ENCODE measurements at regions of chr10 and their contacts with region 1.

Region 1: GRCh38 chr10:100481462-100482081 is 18.8 kb downstream of the WNT8B start:
- DNase-seq: peak; percentile 79 to 98 (median 92)
- ATAC-seq: peak; percentile 96
- H3K4me3 ChIP-seq: peak overlapping the region; percentile 69
- H3K4me3 Mint-ChIP-seq: peak overlapping the region; percentile 80
- H3K27ac ChIP-seq: no peak overlapping the region
- H3K27ac Mint-ChIP-seq: no peak overlapping the region
- H3K4me1 ChIP-seq: peaks cover 17% of the 10 kb centered on the region
- H3K4me1 Mint-ChIP-seq: peaks cover 13% of the 10 kb centered on the region
- H3K27me3 ChIP-seq: peaks cover 17 to 22% of the 10 kb centered on the region in 2 experiments
- H3K27me3 Mint-ChIP-seq: peaks cover 32% of the 10 kb centered on the region
- CTCF ChIP-seq: no peak

Region 2: GRCh38 chr10:100223879-100224278 is 257.7 kb before region 1 on chr10:
- CTCF ChIA-PET with region 1: no interaction called
- POLR2A ChIA-PET with region 1: no interaction called
- intact Hi-C with region 1: no loop called
- DNase-seq: no peak
- ATAC-seq: no peak
- H3K4me3 ChIP-seq: no peak overlapping the region
- H3K4me3 Mint-ChIP-seq: no peak overlapping the region
- H3K27ac ChIP-seq: no peak overlapping the region
- H3K27ac Mint-ChIP-seq: no peak overlapping the region
- H3K4me1 ChIP-seq: peaks cover 9% of the 10 kb centered on the region
- H3K4me1 Mint-ChIP-seq: peaks cover 18% of the 10 kb centered on the region
- H3K27me3 ChIP-seq: no peaks in the 10 kb centered on the region
- H3K27me3 Mint-ChIP-seq: no peaks in the 10 kb centered on the region
- CTCF ChIP-seq: no peak

Region 3: DNA sequence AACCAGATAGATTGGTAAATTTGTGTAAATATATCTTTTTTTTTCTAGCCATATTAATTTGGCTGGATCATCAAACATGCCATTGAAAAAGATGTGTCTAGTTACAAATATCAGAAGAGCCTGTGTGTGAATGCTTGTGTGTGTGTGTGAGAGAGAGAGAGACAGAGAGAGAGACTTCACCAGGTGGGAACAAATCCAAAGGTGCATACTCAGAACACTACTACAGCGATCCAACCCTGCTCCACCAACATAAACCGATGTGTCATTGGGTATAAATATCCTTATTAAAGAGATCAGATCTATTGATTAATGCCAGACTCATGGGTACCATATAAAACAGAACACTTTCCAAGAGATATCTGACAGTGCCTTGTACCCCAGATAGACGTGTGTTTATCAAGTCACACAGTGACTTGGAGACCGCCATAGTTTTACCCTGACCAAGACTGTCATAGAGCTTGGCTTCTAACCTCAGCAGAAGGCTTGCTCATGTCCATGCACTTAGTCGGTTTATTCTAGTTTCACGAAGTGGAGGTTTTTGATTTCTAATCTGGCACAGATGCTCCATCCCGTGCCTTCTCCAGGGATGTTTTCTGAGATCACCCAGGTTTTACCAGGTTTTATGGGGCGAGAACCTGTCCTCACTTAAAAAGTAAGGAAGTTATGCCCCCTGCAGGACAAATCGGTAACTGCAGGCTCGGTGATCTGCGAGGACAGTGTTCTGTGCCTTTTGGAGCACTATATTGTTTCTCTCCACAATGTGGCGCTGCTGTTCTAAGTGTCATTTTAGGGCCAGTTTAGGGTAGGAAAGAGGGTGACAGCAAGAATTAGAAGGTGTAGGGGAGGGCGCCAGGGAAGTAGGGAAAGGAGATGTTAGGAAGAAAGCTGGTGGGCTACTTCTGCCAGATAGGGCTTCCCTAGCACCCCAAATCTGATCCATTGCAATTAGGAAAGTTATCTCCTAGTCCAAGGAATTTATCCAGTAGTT is 48.0 kb before region 1 on chr10:
- CTCF ChIA-PET with region 1: interaction called, 10 read pairs
- POLR2A ChIA-PET with region 1: no interaction called
- intact Hi-C with region 1: loop called in 1 of 2 experiments (anchors 5 kb)
- DNase-seq: peak; percentile 88 to 99 (median 94)
- ATAC-seq: peak; percentile 99
- H3K4me3 ChIP-seq: no peak overlapping the region
- H3K4me3 Mint-ChIP-seq: no peak overlapping the region
- H3K27ac ChIP-seq: no peak overlapping the region
- H3K27ac Mint-ChIP-seq: no peak overlapping the region
- H3K4me1 ChIP-seq: peaks cover 5% of the 10 kb centered on the region
- H3K4me1 Mint-ChIP-seq: no peaks in the 10 kb centered on the region
- H3K27me3 ChIP-seq: no peaks in the 10 kb centered on the region
- H3K27me3 Mint-ChIP-seq: peaks cover 5% of the 10 kb centered on the region
- CTCF ChIP-seq: peak; percentile 100

Region 4: DNA sequence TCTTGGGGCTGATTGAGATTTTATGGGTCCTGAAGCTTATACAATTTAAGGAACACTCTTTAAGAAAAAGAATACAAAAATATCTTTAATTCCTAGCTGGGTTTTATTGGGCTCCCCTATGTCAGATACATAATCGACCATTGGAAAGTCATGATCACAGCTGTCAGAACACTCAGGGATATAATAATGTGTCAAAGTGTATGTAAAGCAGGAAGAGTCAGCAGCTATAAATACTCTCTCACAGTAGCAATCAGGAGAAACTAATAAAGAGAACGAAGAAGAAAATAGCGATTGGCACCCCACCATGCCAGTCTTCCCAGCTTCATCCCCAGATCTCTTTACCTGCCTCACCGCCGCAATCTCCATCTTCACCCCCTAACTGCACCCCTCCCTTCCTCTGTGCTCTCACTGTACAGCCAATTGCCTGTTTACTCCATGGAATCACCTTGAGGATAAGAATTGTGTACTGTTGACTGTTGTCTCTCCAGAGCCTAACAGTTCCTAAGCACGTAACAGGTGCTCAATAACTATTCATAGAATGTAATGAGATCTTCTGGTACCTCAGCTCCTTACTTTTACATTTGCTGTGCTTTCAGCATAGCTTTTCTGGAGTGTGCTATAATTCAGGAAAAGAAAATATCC is 42.8 kb before region 1 on chr10:
- CTCF ChIA-PET with region 1: interaction called, 10 read pairs
- POLR2A ChIA-PET with region 1: no interaction called
- intact Hi-C with region 1: loop called in 1 of 2 experiments (anchors 5 kb)
- DNase-seq: no peak
- ATAC-seq: no peak
- H3K4me3 ChIP-seq: no peak overlapping the region
- H3K4me3 Mint-ChIP-seq: no peak overlapping the region
- H3K27ac ChIP-seq: no peak overlapping the region
- H3K27ac Mint-ChIP-seq: no peak overlapping the region
- H3K4me1 ChIP-seq: peaks cover 2% of the 10 kb centered on the region
- H3K4me1 Mint-ChIP-seq: no peaks in the 10 kb centered on the region
- H3K27me3 ChIP-seq: no peaks in the 10 kb centered on the region
- H3K27me3 Mint-ChIP-seq: peaks cover 3% of the 10 kb centered on the region
- CTCF ChIP-seq: no peak

Region 5: DNA sequence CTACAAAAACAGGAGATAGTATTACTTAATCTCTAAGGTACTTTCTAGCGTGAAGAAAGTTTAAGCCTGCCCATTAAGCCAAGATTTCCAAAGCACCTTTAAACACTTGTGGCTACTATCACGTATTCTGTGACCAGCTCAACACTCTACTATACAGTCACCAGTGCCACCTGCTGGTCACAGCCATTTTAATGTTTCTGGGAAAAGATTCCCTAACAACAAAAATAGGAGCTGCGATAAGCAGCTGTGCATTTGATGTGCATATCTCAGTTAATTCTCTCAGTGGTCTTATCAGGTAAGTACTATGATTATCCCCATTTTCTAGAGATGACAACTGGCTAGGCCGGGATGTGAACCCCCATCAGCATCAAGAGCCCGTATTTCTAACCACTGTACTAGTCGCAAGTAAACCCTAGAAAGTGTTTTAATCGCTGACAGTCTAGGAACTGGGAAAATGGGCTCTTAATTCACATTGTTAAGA is 37.2 kb after region 1 on chr10:
- CTCF ChIA-PET with region 1: interaction called, 45 read pairs
- POLR2A ChIA-PET with region 1: interaction called, 4 read pairs
- intact Hi-C with region 1: loop called (anchors 1 to 2 kb)
- DNase-seq: peak; percentile 38 to 76 (median 52)
- ATAC-seq: peak; percentile 80
- H3K4me3 ChIP-seq: no peak overlapping the region
- H3K4me3 Mint-ChIP-seq: no peak overlapping the region
- H3K27ac ChIP-seq: no peak overlapping the region
- H3K27ac Mint-ChIP-seq: peak overlapping the region; percentile 29
- H3K4me1 ChIP-seq: peaks cover 12% of the 10 kb centered on the region
- H3K4me1 Mint-ChIP-seq: peaks cover 16% of the 10 kb centered on the region
- H3K27me3 ChIP-seq: no peaks in the 10 kb centered on the region
- H3K27me3 Mint-ChIP-seq: no peaks in the 10 kb centered on the region
- CTCF ChIP-seq: peak; percentile 88

Region 6: GRCh38 chr10:100551196-100551595 is 69.6 kb after region 1 on chr10:
- CTCF ChIA-PET with region 1: no interaction called
- POLR2A ChIA-PET with region 1: no interaction called
- intact Hi-C with region 1: no loop called
- DNase-seq: no peak
- ATAC-seq: no peak
- H3K4me3 ChIP-seq: no peak overlapping the region
- H3K4me3 Mint-ChIP-seq: no peak overlapping the region
- H3K27ac ChIP-seq: no peak overlapping the region
- H3K27ac Mint-ChIP-seq: no peak overlapping the region
- H3K4me1 ChIP-seq: no peaks in the 10 kb centered on the region
- H3K4me1 Mint-ChIP-seq: no peaks in the 10 kb centered on the region
- H3K27me3 ChIP-seq: no peaks in the 10 kb centered on the region
- H3K27me3 Mint-ChIP-seq: no peaks in the 10 kb centered on the region
- CTCF ChIP-seq: no peak

Measured in CD4-positive, alpha-beta T cell (primary cell).